PC-3 (cell line): ENCODE measurements at regions of chr20 and their contacts with region 1.

Region 1: DNA sequence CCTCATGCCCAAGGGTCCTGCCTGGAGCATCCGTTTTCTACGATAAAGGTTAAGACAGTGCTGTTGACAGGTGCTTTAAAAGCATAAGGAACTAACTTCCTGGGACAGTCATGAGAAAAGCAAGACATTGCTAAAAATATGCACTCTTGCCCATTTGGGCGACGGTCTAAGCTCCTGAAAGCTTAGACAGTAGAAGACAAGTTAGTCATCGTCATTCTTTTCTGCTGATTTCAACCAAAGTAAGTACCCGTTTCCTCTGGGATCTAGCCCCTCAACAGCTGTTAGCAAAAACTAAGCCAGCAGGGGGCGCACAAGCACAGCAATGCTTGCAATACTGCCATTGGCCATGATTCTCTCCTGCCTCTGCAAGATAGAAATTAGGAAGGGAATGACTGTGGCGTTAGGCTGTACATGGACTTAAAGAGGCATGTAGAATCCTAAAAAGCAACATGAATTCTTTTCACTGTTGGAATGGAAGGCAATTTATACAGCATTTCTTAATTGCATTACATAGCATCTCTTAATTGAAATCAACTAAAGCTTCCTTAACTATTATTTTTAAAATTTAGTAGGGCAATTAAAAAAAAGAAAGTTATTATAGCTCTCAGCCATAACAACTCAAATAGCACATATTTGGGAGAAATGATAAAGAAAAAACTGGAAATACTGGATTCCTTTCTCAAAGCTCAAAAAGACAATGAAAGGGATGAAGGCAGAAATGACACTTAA is 147.8 kb upstream of the RALGAPA2 start:
- DNase-seq: peak; percentile 98
- ATAC-seq: peak; percentile 94
- H3K4me3 ChIP-seq: no peak overlapping the region
- H3K27ac ChIP-seq: no peak overlapping the region
- H3K4me1 ChIP-seq: no peaks in the 10 kb centered on the region
- H3K27me3 ChIP-seq: peaks cover 12% of the 10 kb centered on the region; the same call in 1 of the 2 replicates
- CTCF ChIP-seq: peak; percentile 98

Region 2: DNA sequence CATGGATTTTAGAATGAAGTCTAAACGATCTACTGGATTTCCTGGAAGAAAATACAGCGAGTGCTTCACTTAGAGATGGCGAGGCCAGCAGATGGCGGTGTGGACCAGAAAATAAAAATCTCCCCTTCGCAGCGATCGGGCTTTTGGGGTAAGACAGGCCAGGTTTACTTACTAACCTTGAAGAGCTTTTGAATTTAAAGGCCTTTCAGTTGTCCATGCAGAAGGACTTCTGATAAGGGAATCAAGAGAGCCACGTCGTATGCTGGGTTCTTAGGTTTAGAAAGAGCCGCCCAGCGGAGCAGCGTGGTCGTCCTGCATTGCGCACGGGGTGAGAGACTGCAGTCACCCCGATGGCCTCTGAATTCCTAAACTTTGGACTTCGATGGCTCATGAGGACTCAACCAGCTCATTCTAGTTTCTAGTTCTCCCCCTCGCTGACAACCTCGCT is 22.6 kb before region 1 on chr20:
- CTCF ChIA-PET with region 1: no interaction called
- POLR2A ChIA-PET with region 1: no interaction called
- intact Hi-C with region 1: loop called (anchors 1 kb)
- DNase-seq: peak; percentile 76
- ATAC-seq: peak; percentile 66
- H3K4me3 ChIP-seq: no peak overlapping the region
- H3K27ac ChIP-seq: no peak overlapping the region
- H3K4me1 ChIP-seq: no peaks in the 10 kb centered on the region
- H3K27me3 ChIP-seq: peaks cover 39% of the 10 kb centered on the region
- CTCF ChIP-seq: peak; percentile 92

Region 3: GRCh38 chr20:21235484-21236445 is 375.5 kb after region 1 on chr20:
- CTCF ChIA-PET with region 1: interaction called, 4 read pairs
- POLR2A ChIA-PET with region 1: no interaction called
- intact Hi-C with region 1: loop called (anchors 1 kb)
- DNase-seq: peak; percentile 86
- ATAC-seq: peak; percentile 79
- H3K4me3 ChIP-seq: peak overlapping the region; percentile 11; the same call in 1 of the 2 replicates
- H3K27ac ChIP-seq: peak overlapping the region; percentile 6; the same call in 1 of the 2 replicates
- H3K4me1 ChIP-seq: peaks cover 20% of the 10 kb centered on the region
- H3K27me3 ChIP-seq: no peaks in the 10 kb centered on the region
- CTCF ChIP-seq: peak; percentile 97

Region 4: GRCh38 chr20:21490095-21490494 is 629.9 kb after region 1 on chr20:
- CTCF ChIA-PET with region 1: no interaction called
- POLR2A ChIA-PET with region 1: no interaction called
- intact Hi-C with region 1: loop called (anchors 5 kb)
- DNase-seq: peak; percentile 45
- ATAC-seq: no peak
- H3K4me3 ChIP-seq: no peak overlapping the region
- H3K27ac ChIP-seq: no peak overlapping the region
- H3K4me1 ChIP-seq: no peaks in the 10 kb centered on the region
- H3K27me3 ChIP-seq: peaks cover 70% of the 10 kb centered on the region
- CTCF ChIP-seq: peak; percentile 62

Region 5: DNA sequence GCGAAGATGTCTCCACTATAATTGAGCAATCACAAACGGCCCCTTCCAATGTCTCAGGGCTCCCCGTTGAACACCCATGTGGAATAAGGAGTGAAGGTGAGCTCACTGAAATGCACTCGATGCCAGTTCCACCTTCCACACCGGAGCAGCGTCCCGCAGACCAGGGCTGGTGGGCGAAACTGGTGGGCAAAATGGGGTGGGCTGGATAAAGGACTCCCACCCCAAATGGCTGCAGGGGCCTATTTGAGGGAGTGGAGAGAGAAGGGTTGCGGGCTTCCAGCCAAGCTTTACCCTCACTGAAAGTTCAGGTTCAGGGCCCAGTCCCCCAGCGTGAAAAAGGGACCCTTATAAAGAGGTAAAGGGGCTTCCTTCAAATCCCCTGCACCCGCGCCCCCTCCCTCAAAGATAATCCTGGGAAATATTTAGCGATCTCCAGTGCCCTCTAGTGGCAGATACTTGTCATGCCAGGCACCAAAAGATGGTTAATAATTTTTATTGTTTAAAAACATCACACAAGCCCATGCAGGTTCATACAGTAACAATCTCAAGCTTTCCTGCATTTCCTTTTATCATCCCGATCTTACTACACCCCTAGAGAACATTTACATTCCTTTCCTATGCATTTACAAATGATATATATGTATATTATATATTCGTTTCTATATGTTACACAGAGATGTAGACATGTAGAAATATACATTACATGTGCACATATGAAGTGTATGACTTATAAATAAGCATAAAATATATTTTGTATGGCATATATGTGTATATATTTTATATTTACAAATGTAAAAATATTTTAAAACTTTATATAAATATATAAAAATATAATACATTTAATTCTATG is 711.8 kb after region 1 on chr20:
- CTCF ChIA-PET with region 1: no interaction called
- POLR2A ChIA-PET with region 1: no interaction called
- intact Hi-C with region 1: loop called (anchors 2 kb)
- DNase-seq: peak; percentile 34
- ATAC-seq: no peak; the same call in 1 of the 2 replicates
- H3K4me3 ChIP-seq: no peak overlapping the region
- H3K27ac ChIP-seq: no peak overlapping the region
- H3K4me1 ChIP-seq: no peaks in the 10 kb centered on the region
- H3K27me3 ChIP-seq: peaks cover 65% of the 10 kb centered on the region
- CTCF ChIP-seq: peak; percentile 95

Region 6: DNA sequence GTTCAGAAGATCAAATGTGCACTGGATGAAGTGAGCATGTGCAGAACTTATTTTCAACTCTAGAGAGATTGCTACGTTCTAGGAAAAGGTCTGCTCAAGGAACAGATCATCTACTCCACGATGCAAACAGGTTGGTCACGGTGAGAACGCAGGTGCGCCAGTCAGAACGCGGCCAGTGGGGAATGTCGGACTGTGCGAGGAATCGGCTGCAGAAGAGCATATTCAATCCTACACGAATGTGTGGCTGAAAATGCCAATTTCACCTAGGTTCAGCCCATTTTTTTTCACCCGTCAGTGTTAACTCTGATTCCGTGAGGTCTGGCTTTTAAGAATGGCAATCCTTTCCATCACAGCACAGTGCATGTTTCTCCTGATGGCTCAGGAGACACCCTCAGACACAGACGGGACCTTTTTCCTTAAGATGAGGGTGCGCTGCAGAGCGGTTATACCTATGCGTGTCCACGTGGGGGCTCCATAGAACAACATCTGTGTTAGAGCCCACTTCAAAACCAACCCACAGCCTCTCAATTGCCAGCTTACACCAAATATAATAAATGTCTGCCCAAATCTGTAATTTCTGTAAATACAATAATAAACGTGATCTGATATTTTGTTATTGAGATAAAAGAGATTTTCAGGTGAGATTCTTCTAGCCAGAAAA is 1473.8 kb after region 1 on chr20:
- CTCF ChIA-PET with region 1: interaction called, 14 read pairs
- POLR2A ChIA-PET with region 1: no interaction called
- intact Hi-C with region 1: no loop called
- DNase-seq: peak; percentile 84
- ATAC-seq: peak; percentile 91
- H3K4me3 ChIP-seq: no peak overlapping the region
- H3K27ac ChIP-seq: no peak overlapping the region
- H3K4me1 ChIP-seq: no peaks in the 10 kb centered on the region
- H3K27me3 ChIP-seq: peaks cover 51% of the 10 kb centered on the region
- CTCF ChIP-seq: peak; percentile 94